Activated naive CD8-positive, alpha-beta T cell treated with anti-CD3 and anti-CD28 coated beads, Interleukin-2, amount 10 ng/mL, durations not matched to agents 7 days and 5 days (primary cell): ENCODE measurements at regions of chr18 and their contacts with region 1.

Region 1: GRCh38 chr18:48940854-48941611 is 9.7 kb downstream of the SMAD7 start:
- DNase-seq: peak; percentile 76
- ATAC-seq: peak; percentile 85
- H3K4me3 Mint-ChIP-seq: peak overlapping the region; percentile 91
- H3K27ac Mint-ChIP-seq: peak overlapping the region; percentile 98
- H3K4me1 Mint-ChIP-seq: peaks cover 79% of the 10 kb centered on the region
- H3K27me3 Mint-ChIP-seq: no peaks in the 10 kb centered on the region

Region 2: GRCh38 chr18:48922801-48923730 is 18.0 kb before region 1 on chr18:
- POLR2A ChIA-PET with region 1: interaction called, 21 read pairs
- DNase-seq: peak; percentile 26
- ATAC-seq: no peak
- H3K4me3 Mint-ChIP-seq: peak overlapping the region; percentile 85
- H3K27ac Mint-ChIP-seq: peak overlapping the region; percentile 90
- H3K4me1 Mint-ChIP-seq: peaks cover 59% of the 10 kb centered on the region
- H3K27me3 Mint-ChIP-seq: no peaks in the 10 kb centered on the region

Region 3: GRCh38 chr18:48928787-48929186 is 12.2 kb before region 1 on chr18:
- POLR2A ChIA-PET with region 1: interaction called, 21 read pairs
- DNase-seq: peak; percentile 67
- ATAC-seq: peak; percentile 93
- H3K4me3 Mint-ChIP-seq: peak overlapping the region; percentile 77
- H3K27ac Mint-ChIP-seq: peak overlapping the region; percentile 72
- H3K4me1 Mint-ChIP-seq: peaks cover 84% of the 10 kb centered on the region
- H3K27me3 Mint-ChIP-seq: no peaks in the 10 kb centered on the region

Region 4: DNA sequence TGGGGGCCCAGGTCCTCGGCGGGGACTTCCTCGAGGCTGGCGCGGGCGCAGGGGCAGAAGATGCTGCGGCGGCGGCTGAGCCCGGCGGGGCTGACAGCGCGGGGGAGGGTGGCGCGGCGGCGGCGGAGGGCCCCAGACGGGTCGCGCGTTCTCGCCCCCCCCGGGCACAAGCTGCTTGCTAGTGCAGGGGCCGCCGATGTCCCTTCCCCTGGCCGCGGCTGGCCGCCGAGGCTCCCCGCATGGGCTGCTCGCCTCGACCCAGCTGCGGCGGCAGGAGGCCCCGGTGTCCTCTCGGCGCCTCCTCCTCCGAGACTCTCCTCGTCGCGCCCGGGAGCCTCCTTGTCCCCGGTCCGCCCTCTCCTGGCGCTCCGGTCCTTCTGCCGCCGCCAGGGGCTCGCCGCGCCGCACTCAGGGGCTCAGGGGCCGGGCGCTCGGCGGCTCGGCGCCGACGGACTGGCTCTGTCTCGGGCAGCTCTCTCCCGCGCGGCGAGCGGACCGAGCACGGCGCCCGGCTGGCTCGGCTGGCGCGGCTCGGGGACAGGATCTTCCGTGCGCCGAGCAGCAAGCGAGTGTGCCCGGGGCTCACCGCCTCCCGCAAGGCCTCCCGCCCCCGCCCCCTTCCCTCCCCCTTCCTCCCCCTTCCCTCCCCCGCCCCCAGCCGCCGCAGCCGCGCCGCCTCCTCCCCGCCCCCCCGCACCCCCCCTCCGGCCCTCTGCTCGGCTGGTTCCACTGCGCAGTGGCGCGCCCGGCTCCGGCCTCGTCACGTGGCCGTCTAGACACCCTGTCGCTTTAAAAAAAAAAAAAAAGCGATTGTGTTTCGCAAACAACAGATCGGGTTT is 10.6 kb after region 1 on chr18:
- POLR2A ChIA-PET with region 1: interaction called, 35 read pairs
- DNase-seq: peak; percentile 81
- ATAC-seq: peak; percentile 51
- H3K4me3 Mint-ChIP-seq: peak overlapping the region; percentile 97
- H3K27ac Mint-ChIP-seq: peak overlapping the region; percentile 84
- H3K4me1 Mint-ChIP-seq: peaks cover 20% of the 10 kb centered on the region
- H3K27me3 Mint-ChIP-seq: peaks cover 8% of the 10 kb centered on the region